ENCODE measurements at regions of chr20 and their contacts with region 1.

Region 1: DNA sequence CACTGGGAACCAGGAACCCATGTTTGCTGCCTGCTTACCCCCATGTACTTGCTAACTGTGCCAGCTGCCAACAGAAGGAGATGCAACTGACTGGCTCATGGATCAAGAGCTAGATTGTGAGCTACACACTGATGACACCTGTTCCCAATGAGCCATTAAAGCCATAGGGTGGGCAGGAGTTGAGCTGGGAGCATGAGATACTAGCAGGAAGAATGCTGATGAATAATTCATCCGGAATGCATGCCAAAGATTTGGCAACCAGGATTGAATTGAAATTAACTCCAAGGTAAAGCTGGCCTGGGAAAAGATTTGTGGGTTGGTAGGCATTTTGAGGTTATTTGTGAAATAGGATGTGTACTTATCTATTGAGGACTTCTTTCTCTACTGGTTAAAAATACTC is 631.1 kb downstream of the KIF16B start:
- DNase-seq: no peak
- ATAC-seq: no peak
- H3K4me3 ChIP-seq: no peak overlapping the region
- H3K27ac ChIP-seq: no peak overlapping the region
- H3K4me1 ChIP-seq: no peaks in the 10 kb centered on the region
- CTCF ChIP-seq: no peak
- EP300 ChIP-seq: no peak
- POLR2A ChIP-seq: no peak
- RAD21 ChIP-seq: no peak

Region 2: GRCh38 chr20:16573001-16573965 is 631.2 kb after region 1 on chr20 and contains the start of gene KIF16B:
- CTCF ChIA-PET with region 1: no interaction called
- POLR2A ChIA-PET with region 1: interaction called, 11 read pairs
- DNase-seq: peak; percentile 85 to 96
- ATAC-seq: peak; percentile 75 to 85
- H3K4me3 ChIP-seq: peak within 1 kb of the TSS; percentile 63
- H3K27ac ChIP-seq: peak within 1 kb of the TSS; percentile 90 to 92
- H3K4me1 ChIP-seq: peaks cover 29% of the 10 kb centered on the region
- CTCF ChIP-seq: no peak
- EP300 ChIP-seq: no peak
- POLR2A ChIP-seq: peak; percentile 82
- RAD21 ChIP-seq: peak in 1 of 2 experiments; percentile 19; a peak in 3 of 5 replicates
- polyA plus RNA-seq, gene KIF16B: 23.3 and 27.4 TPM in 2 replicates